H1 (cell line): ENCODE measurements at regions of chr14 and their contacts with region 1.

Region 1: DNA sequence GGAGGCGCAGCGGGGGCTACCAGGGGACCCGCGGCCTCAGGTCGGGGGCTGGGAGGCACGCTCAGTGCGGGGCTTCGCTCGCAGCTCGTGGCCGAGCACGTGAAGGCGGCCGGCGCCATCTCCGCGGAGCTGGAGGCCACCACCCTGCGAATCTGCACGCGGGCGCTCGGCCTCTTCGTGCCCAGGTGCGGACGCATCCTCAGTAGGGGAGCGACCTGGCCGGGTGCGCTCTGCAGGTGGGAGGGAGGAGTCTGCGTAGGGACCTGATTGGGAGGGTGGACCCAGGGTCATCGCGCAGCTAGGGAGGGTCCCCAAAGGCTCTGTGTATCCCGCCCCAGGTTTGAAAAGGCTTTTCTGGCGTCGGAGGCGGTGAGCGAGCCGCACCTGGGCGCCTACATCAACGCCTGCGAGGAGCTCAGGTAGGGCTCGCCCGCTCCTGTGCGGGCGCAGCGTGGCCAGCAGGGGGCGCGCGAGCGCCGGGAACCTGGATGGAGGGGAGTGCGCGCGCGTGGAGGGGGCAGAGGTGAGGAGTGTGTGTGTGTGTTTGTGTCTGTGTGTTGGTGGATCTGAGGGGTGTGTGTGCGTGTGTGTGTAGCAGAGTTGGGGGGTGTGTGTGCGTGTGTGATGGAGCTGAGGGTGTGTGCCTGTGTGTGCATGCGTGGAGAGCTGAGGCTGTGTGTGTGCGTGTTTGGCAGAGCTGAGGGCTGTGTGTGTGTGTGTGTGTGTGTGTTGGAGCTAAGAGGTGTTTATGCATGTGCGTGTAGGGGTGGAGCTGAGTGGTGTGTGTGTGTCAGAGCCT is 10.3 kb downstream of the EXOC3L4 start:
- DNase-seq: peak in 1 of 2 experiments; percentile 93
- H3K4me3 ChIP-seq: peak overlapping the region in 3 of 4 experiments; percentile 15 to 39 (median 32); a peak in 4 of 8 replicates
- H3K27ac ChIP-seq: no peak overlapping the region
- H3K4me1 ChIP-seq: peaks cover 2 to 29% (median 19%) of the 10 kb centered on the region in 4 experiments
- H3K27me3 ChIP-seq: peaks cover 7 to 42% (median 34%) of the 10 kb centered on the region in 4 experiments
- CTCF ChIP-seq: peak in 2 of 3 experiments; percentile 86 to 94; a peak in 3 of 4 replicates
- EP300 ChIP-seq: no peak
- POLR2A ChIP-seq: no peak
- RAD21 ChIP-seq: peak; percentile 84 to 95

Region 2: GRCh38 chr14:103014466-103015319 is 90.2 kb before region 1 on chr14:
- CTCF ChIA-PET with region 1: no interaction called
- POLR2A ChIA-PET with region 1: no interaction called
- DNase-seq: no peak
- H3K4me3 ChIP-seq: no peak overlapping the region
- H3K27ac ChIP-seq: no peak overlapping the region
- H3K4me1 ChIP-seq: peaks cover 0 to 7% (median 3%) of the 10 kb centered on the region in 4 experiments; a peak in 3 of 7 replicates
- H3K27me3 ChIP-seq: no peaks in the 10 kb centered on the region; a peak in 1 of 7 replicates
- CTCF ChIP-seq: no peak
- EP300 ChIP-seq: no peak
- POLR2A ChIP-seq: no peak
- RAD21 ChIP-seq: no peak

Region 3: GRCh38 chr14:103085106-103086091 is 19.5 kb before region 1 on chr14:
- CTCF ChIA-PET with region 1: interaction called, 43 read pairs
- POLR2A ChIA-PET with region 1: no interaction called
- DNase-seq: peak in 1 of 2 experiments; percentile 84
- H3K4me3 ChIP-seq: no peak overlapping the region
- H3K27ac ChIP-seq: no peak overlapping the region
- H3K4me1 ChIP-seq: peaks cover 0 to 3% (median 1%) of the 10 kb centered on the region in 4 experiments; a peak in 3 of 7 replicates
- H3K27me3 ChIP-seq: peaks cover 3 to 20% (median 16%) of the 10 kb centered on the region in 4 experiments; a peak in 6 of 7 replicates
- CTCF ChIP-seq: peak in 2 of 3 experiments; percentile 76 to 81; a peak in 3 of 4 replicates
- EP300 ChIP-seq: no peak
- POLR2A ChIP-seq: no peak
- RAD21 ChIP-seq: peak; percentile 40 to 62; a peak in 3 of 4 replicates

Region 4: GRCh38 chr14:103141119-103141796 is 36.4 kb after region 1 on chr14:
- CTCF ChIA-PET with region 1: interaction called, 147 read pairs
- POLR2A ChIA-PET with region 1: interaction called, 10 read pairs
- DNase-seq: peak; percentile 65 to 89
- H3K4me3 ChIP-seq: no peak overlapping the region
- H3K27ac ChIP-seq: no peak overlapping the region
- H3K4me1 ChIP-seq: peaks cover 0 to 11% (median 6%) of the 10 kb centered on the region in 4 experiments; a peak in 6 of 7 replicates
- H3K27me3 ChIP-seq: peaks cover 0 to 23% (median 11%) of the 10 kb centered on the region in 4 experiments; a peak in 6 of 7 replicates
- CTCF ChIP-seq: peak in 2 of 3 experiments; percentile 91 to 96; a peak in 3 of 4 replicates
- EP300 ChIP-seq: no peak
- POLR2A ChIP-seq: no peak
- RAD21 ChIP-seq: peak; percentile 46 to 73

Region 5: DNA sequence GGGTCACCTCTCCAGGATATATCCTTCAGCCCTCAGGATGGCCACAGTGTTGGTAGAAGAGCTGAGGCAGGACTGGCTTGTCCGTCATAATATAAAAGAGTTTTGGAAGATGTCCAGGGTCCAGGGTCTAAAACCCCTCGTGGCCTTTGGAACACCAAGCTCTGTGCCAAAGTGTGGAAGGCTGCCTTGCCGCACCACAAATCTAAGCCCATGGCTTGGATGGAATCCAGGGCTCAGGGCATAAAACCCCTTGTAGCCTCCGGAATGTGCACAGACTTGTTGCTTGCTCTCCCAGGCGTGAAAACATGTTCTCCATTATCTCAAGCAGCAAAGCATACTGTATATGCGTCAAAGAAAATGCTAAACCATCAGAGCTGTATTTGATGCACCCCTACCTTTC is 65.1 kb after region 1 on chr14:
- CTCF ChIA-PET with region 1: interaction called, 13 read pairs
- POLR2A ChIA-PET with region 1: no interaction called
- DNase-seq: no peak
- H3K4me3 ChIP-seq: no peak overlapping the region
- H3K27ac ChIP-seq: no peak overlapping the region
- H3K4me1 ChIP-seq: no peaks in the 10 kb centered on the region
- H3K27me3 ChIP-seq: no peaks in the 10 kb centered on the region
- CTCF ChIP-seq: no peak
- EP300 ChIP-seq: no peak
- POLR2A ChIP-seq: no peak
- RAD21 ChIP-seq: no peak

Region 6: DNA sequence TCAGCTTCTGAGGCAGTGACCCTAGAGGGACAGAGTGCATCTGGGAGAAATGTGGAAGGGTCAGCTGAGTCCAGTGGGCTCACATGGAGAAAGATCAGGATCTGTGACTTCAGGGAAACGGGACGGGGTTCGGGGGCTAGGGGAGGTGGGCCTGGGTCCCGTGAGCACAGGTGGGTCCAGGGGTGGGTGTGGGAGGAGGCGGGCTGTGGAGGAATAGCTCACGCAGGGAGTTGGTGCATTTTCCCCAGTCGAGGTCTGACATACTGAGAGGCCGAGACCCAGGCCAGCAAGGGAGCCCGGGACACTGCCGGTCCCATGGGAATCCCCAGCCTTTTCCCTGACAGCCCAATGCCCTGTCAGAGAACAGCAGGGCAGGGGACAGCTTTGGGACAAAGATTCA is 111.5 kb after region 1 on chr14:
- CTCF ChIA-PET with region 1: interaction called, 10 read pairs
- POLR2A ChIA-PET with region 1: interaction called, 4 read pairs
- DNase-seq: no peak
- H3K4me3 ChIP-seq: no peak overlapping the region
- H3K27ac ChIP-seq: no peak overlapping the region
- H3K4me1 ChIP-seq: peaks cover 0 to 8% (median 1%) of the 10 kb centered on the region in 4 experiments; a peak in 5 of 7 replicates
- H3K27me3 ChIP-seq: peaks cover 8 to 22% (median 19%) of the 10 kb centered on the region in 4 experiments
- CTCF ChIP-seq: no peak
- EP300 ChIP-seq: no peak
- POLR2A ChIP-seq: no peak
- RAD21 ChIP-seq: no peak

Region 7: DNA sequence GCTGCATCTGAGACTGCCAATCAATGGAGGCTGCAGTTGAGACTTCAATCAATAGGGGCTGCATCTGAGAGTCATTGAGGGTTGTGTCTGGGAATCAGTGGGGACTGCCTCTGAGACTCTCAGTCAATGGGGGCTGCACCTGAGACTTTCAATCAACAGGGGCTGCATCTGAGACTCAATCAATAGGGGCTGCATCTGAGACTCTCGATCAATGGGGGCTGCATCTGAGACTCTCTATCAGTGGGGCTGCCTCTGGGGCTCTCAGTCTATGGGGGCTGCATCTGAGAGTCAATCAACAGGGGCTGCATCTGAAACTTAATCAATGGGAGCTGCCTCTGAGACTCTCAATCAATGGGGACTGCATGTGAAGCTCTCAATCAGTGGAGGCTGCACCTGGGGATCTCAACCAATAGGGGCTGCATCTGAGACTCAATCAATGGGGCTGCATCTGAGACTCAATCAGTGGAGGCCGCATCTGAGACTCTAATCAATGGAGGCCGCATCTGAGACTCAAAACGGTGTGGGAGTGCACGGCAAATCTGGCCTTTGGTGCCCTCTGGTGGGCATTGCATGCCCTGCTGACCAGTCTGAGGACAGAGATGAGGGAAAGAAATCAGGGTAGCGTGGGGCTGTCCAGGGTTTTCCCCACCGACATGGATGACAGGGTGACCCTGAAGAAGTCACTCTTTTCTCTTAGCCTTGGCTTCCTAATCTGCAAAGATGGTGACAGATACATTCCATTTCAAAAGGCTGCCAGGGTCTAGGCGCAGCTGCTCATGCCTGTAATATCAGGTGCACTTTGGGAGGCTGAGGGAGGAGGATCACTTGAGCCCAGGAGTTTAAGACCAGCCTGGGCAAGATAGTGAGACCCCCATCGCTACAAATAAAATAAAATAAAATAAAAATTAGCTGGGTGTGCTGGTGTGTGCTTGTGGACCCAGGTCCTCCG is 187.8 kb after region 1 on chr14:
- CTCF ChIA-PET with region 1: interaction called, 128 read pairs
- POLR2A ChIA-PET with region 1: no interaction called
- DNase-seq: peak in 1 of 2 experiments; percentile 92
- H3K4me3 ChIP-seq: no peak overlapping the region
- H3K27ac ChIP-seq: no peak overlapping the region
- H3K4me1 ChIP-seq: peaks cover 0 to under 1% (median under 1%) of the 10 kb centered on the region in 4 experiments; a peak in 2 of 7 replicates
- H3K27me3 ChIP-seq: no peaks in the 10 kb centered on the region; a peak in 1 of 7 replicates
- CTCF ChIP-seq: peak; percentile 93 to 97 (median 93)
- EP300 ChIP-seq: no peak
- POLR2A ChIP-seq: no peak
- RAD21 ChIP-seq: peak; percentile 96 to 98

Region 8: DNA sequence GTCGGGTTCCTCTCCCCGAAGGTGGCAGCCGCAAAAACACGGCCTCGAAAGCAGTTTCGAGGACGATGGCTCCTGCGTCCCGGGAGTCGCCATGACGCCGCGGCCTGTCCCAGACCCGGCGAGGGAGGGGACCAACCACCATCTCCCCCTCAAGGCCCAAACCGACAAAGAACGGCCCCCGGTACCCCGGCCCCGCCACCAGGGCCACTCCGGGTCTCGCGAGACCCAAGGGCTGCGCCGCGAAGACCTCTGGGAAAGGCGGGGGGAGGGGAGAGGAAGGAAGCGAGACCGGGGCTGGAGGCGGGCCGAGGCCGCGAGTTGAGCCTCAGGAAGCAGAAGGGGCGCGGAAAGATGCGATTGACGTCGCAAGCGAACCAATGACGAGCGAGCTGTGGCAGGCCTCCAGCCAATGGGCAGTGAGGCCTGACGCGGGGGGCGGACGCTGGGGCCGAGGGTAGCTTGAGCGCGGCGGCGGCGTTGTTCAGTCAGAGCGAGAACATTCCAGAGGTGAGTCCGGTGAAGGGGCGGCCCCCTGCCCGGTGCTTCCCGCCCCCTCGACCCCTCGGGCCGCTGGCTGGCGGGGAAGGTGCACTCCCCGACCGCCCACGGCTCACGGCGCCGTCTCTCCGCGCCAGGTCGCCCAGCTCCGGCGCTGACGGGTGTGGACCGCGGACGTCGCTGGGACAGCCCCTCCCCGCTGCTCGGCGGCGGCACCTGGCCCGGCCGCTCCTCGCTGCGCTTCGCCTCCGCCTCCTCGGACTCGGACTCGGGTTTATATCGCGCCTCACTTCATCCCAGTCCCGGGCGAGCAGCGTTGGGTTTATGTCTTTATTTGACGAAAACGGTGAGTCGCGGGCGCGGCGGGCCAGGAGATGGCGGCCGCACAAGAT is 229.1 kb after region 1 on chr14 and contains the start of gene EIF5:
- CTCF ChIA-PET with region 1: interaction called, 4 read pairs
- POLR2A ChIA-PET with region 1: interaction called, 14 read pairs
- DNase-seq: peak; percentile 95 to 98
- H3K4me3 ChIP-seq: peak within 1 kb of the TSS; percentile 90 to 93 (median 92)
- H3K27ac ChIP-seq: peak within 1 kb of the TSS; percentile 98
- H3K4me1 ChIP-seq: peaks cover 0 to 8% (median 4%) of the 10 kb centered on the region in 4 experiments; a peak in 4 of 7 replicates
- H3K27me3 ChIP-seq: no peaks in the 10 kb centered on the region
- CTCF ChIP-seq: no peak
- EP300 ChIP-seq: no peak
- POLR2A ChIP-seq: peak; percentile 98 to 100
- RAD21 ChIP-seq: no peak; a peak in 1 of 4 replicates
- total RNA-seq, gene EIF5: 323 and 328 TPM in 2 replicates